CD8-positive, alpha-beta T cell (primary cell): ENCODE measurements at regions of chr11 and their contacts with region 1.

Region 1: DNA sequence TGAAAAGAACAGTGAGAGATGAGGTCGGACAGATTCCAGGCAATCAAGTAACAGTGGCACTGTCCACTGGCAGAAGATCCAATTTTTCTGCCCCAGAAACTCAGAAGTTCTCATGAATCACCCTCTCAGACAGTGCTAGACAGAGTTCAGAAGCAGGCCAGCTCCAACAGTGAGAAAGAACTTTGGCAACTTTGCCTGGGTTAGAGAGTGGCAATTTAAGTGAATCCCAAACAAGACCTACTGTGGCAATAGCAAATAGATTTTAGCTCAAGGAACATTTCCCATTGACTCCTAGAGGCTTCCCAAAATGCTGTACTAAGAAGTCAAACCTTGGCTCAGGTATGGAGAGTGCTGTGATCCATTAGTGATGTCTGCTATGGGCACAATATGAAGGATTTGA is 12.3 kb downstream of the CD44 start:
- DNase-seq: peak in 1 of 9 experiments; percentile 34
- ATAC-seq: no peak
- H3K4me3 ChIP-seq: no peak overlapping the region
- H3K4me3 Mint-ChIP-seq: peak overlapping the region; percentile 48
- H3K27ac ChIP-seq: peak overlapping the region in 1 of 2 experiments; percentile 52
- H3K27ac Mint-ChIP-seq: peak overlapping the region; percentile 87
- H3K4me1 ChIP-seq: peaks cover 100% of the 10 kb centered on the region
- H3K4me1 Mint-ChIP-seq: peaks cover 96% of the 10 kb centered on the region
- H3K27me3 ChIP-seq: no peaks in the 10 kb centered on the region
- H3K27me3 Mint-ChIP-seq: no peaks in the 10 kb centered on the region
- CTCF ChIP-seq: no peak

Region 2: GRCh38 chr11:35173011-35173511 is 21.8 kb after region 1 on chr11:
- CTCF ChIA-PET with region 1: interaction called, 92 read pairs
- POLR2A ChIA-PET with region 1: interaction called, 10 read pairs
- intact Hi-C with region 1: no loop called
- DNase-seq: peak in 1 of 9 experiments; percentile 37
- ATAC-seq: no peak
- H3K4me3 ChIP-seq: peak overlapping the region in 1 of 2 experiments; percentile 10
- H3K4me3 Mint-ChIP-seq: peak overlapping the region; percentile 68
- H3K27ac ChIP-seq: peak overlapping the region; percentile 54 to 97
- H3K27ac Mint-ChIP-seq: peak overlapping the region; percentile 100
- H3K4me1 ChIP-seq: peaks cover 95% of the 10 kb centered on the region
- H3K4me1 Mint-ChIP-seq: peaks cover 96% of the 10 kb centered on the region
- H3K27me3 ChIP-seq: no peaks in the 10 kb centered on the region
- H3K27me3 Mint-ChIP-seq: no peaks in the 10 kb centered on the region
- CTCF ChIP-seq: no peak